Activated CD8-positive, alpha-beta memory T cell treated with anti-CD3 and anti-CD28 coated beads, Interleukin-2, amount 10 ng/mL, durations not matched to agents 7 days and 5 days (primary cell): ENCODE measurements at regions of chr2 and their contacts with region 1.

Region 1: GRCh38 chr2:101387151-101387807 is at the start of gene CREG2:
- DNase-seq: peak; percentile 59
- ATAC-seq: peak; percentile 89
- H3K4me3 Mint-ChIP-seq: peak within 1 kb of the TSS; percentile 42
- H3K27ac Mint-ChIP-seq: no peak within 1 kb of the TSS
- H3K4me1 Mint-ChIP-seq: peaks cover 11% of the 10 kb centered on the region
- H3K27me3 Mint-ChIP-seq: peaks cover 69% of the 10 kb centered on the region
- total RNA-seq, gene CREG2: not detected

Region 2: GRCh38 chr2:101349893-101350662 is 37.2 kb before region 1 on chr2:
- CTCF ChIA-PET with region 1: interaction called, 16 read pairs
- DNase-seq: no peak
- ATAC-seq: no peak
- H3K4me3 Mint-ChIP-seq: no peak overlapping the region
- H3K27ac Mint-ChIP-seq: no peak overlapping the region
- H3K4me1 Mint-ChIP-seq: peaks cover 5% of the 10 kb centered on the region
- H3K27me3 Mint-ChIP-seq: peaks cover 7% of the 10 kb centered on the region

Region 3: GRCh38 chr2:101361121-101361870 is 26.0 kb before region 1 on chr2:
- CTCF ChIA-PET with region 1: interaction called, 22 read pairs
- DNase-seq: peak; percentile 82
- ATAC-seq: peak; percentile 92
- H3K4me3 Mint-ChIP-seq: peak overlapping the region; percentile 3
- H3K27ac Mint-ChIP-seq: peak overlapping the region; percentile 69
- H3K4me1 Mint-ChIP-seq: peaks cover 28% of the 10 kb centered on the region
- H3K27me3 Mint-ChIP-seq: no peaks in the 10 kb centered on the region

Region 4: GRCh38 chr2:101400048-101400447 is 12.8 kb after region 1 on chr2:
- CTCF ChIA-PET with region 1: interaction called, 19 read pairs
- DNase-seq: no peak
- ATAC-seq: no peak
- H3K4me3 Mint-ChIP-seq: no peak overlapping the region
- H3K27ac Mint-ChIP-seq: no peak overlapping the region
- H3K4me1 Mint-ChIP-seq: peaks cover 16% of the 10 kb centered on the region
- H3K27me3 Mint-ChIP-seq: peaks cover 71% of the 10 kb centered on the region

Region 5: GRCh38 chr2:101419096-101419663 is 31.9 kb after region 1 on chr2:
- CTCF ChIA-PET with region 1: interaction called, 10 read pairs
- DNase-seq: peak; percentile 70
- ATAC-seq: peak; percentile 45
- H3K4me3 Mint-ChIP-seq: no peak overlapping the region
- H3K27ac Mint-ChIP-seq: no peak overlapping the region
- H3K4me1 Mint-ChIP-seq: no peaks in the 10 kb centered on the region
- H3K27me3 Mint-ChIP-seq: peaks cover 3% of the 10 kb centered on the region

Region 6: DNA sequence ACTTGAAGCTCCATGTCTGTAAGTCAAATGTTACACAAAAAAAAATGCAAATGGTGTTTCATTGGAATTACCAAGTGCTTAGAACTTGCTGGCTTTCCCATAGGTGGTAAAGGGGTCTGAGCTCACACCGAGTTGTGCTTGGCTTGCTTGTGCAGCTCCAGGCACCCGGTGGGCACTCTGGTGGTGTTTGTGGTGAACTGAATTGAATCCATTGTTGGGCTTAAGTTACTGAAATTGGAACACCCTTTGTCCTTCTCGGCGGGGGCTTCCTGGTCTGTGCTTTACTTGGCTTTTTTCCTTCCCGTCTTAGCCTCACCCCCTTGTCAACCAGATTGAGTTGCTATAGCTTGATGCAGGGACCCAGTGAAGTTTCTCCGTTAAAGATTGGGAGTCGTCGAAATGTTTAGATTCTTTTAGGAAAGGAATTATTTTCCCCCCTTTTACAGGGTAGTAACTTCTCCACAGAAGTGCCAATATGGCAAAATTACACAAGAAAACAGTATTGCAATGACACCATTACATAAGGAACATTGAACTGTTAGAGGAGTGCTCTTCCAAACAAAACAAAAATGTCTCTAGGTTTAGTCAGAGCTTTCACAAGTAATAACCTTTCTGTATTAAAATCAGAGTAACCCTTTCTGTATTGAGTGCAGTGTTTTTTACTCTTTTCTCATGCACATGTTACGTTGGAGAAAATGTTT is 506.6 kb after region 1 on chr2:
- CTCF ChIA-PET with region 1: no interaction called
- DNase-seq: no peak
- ATAC-seq: no peak
- H3K4me3 Mint-ChIP-seq: no peak overlapping the region
- H3K27ac Mint-ChIP-seq: no peak overlapping the region
- H3K4me1 Mint-ChIP-seq: no peaks in the 10 kb centered on the region
- H3K27me3 Mint-ChIP-seq: no peaks in the 10 kb centered on the region